ENCODE measurements at regions of chr6 and their contacts with region 1.

Region 1: DNA sequence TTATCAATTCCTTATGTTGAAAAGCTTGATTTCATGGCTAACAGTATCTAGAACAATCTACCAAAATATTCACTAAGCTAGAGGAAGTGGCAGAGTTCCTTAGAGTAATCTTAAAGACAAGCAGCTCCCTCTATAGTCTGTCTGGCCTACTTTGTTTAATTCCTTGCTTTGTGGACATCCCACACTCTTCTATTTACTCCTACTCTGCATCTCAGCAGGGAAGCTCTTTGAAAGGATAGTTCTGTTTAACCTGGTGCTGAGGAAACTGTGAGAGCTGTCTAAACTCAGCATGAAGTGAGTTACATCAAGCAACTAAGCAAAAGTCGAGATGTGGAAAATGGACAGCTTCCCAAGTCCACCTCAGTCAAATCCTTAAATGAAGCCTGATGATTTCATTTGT is 4.3 kb downstream of the REV3L start:
- DNase-seq: peak; percentile 73
- H3K4me3 Mint-ChIP-seq: peak overlapping the region; percentile 39
- H3K27ac Mint-ChIP-seq: peak overlapping the region; percentile 35
- H3K4me1 Mint-ChIP-seq: peaks cover 38% of the 10 kb centered on the region
- H3K27me3 Mint-ChIP-seq: no peaks in the 10 kb centered on the region
- CTCF ChIP-seq: peak; percentile 39

Region 2: DNA sequence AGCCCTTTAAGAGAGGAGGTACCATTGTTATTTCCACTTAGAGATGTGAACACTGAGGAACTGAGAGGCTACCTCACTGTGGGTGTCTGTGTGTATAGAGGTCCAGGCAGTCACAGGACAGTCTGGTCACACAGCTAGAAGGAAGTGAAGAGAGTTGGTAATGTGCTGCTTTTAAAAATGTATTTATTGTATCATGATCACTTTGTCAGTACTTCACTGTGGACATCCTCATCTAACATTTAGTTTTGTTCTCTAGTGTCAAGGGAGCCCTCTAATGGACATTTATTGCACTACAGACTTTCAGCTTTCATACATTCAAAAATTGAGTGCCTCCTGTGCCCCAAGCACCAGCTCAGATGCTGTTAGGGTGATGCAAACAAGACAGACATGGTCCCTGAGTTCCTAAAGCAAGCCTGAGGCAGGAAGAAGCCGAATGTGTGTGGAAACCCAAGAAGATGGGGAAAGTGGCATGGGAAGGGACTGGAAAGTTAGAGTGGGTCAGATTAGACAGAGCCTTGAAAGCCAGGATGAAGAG is 268.5 kb before region 1 on chr6:
- CTCF ChIA-PET with region 1: interaction called, 12 read pairs
- POLR2A ChIA-PET with region 1: no interaction called
- intact Hi-C with region 1: no loop called
- DNase-seq: peak; percentile 69
- H3K4me3 Mint-ChIP-seq: no peak overlapping the region
- H3K27ac Mint-ChIP-seq: no peak overlapping the region
- H3K4me1 Mint-ChIP-seq: no peaks in the 10 kb centered on the region
- H3K27me3 Mint-ChIP-seq: no peaks in the 10 kb centered on the region
- CTCF ChIP-seq: peak; percentile 60

Region 3: DNA sequence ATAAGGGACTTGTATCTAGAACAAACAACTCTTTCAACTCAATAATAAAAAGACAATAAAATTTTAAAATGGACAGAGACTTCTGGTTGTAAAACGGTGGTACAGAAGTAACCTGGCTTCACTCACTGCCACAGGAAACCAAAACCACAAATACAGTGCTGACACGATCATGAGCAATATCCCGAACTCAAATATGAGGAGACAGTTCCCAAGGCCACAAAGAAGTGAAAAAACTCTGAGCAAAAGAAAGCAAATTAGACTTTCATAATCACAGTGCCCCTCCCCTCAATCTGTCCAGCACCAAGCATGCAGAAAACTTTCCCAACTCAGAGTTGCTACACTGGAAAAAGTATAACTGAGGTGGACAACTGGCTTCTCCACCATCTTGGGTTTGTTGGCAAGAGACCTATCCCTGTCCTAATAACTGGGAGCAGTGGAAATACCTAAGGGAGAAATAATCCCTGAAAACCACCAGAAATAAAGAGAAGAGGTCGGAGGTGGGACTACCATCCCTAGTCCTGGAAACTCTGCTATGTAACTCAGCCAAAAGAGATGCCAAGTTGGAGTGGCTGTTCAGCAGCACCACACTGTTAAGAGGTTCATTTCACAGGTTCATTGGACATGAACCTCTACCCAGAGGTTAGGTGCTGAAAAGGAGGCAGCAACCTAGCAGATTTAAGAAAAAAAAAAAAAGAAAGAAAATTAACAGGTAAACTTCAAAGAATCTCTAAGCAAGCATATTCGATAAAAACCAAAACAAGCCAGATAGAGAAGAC is 51.2 kb before region 1 on chr6:
- CTCF ChIA-PET with region 1: interaction called, 19 read pairs
- POLR2A ChIA-PET with region 1: interaction called, 7 read pairs
- intact Hi-C with region 1: loop called (anchors 2 kb)
- DNase-seq: peak; percentile 89
- H3K4me3 Mint-ChIP-seq: peak overlapping the region; percentile 61
- H3K27ac Mint-ChIP-seq: peak overlapping the region; percentile 56
- H3K4me1 Mint-ChIP-seq: peaks cover 44% of the 10 kb centered on the region
- H3K27me3 Mint-ChIP-seq: no peaks in the 10 kb centered on the region
- CTCF ChIP-seq: no peak

Region 4: GRCh38 chr6:111591104-111591900 is 112.6 kb after region 1 on chr6:
- CTCF ChIA-PET with region 1: interaction called, 3 read pairs
- POLR2A ChIA-PET with region 1: interaction called, 88 read pairs
- intact Hi-C with region 1: no loop called
- DNase-seq: peak; percentile 99
- H3K4me3 Mint-ChIP-seq: peak overlapping the region; percentile 43
- H3K27ac Mint-ChIP-seq: peak overlapping the region; percentile 87
- H3K4me1 Mint-ChIP-seq: peaks cover 53% of the 10 kb centered on the region
- H3K27me3 Mint-ChIP-seq: no peaks in the 10 kb centered on the region
- CTCF ChIP-seq: no peak

Measured in MCF 10A (cell line).